HCT116 (cell line): ENCODE measurements at regions of chr4 and their contacts with region 1.

Region 1: GRCh38 chr4:184460499-184461285 is 13.7 kb downstream of the IRF2 start:
- DNase-seq: no peak
- ATAC-seq: no peak
- H3K4me3 ChIP-seq: no peak overlapping the region
- H3K27ac ChIP-seq: no peak overlapping the region
- H3K4me1 ChIP-seq: no peaks in the 10 kb centered on the region
- H3K27me3 ChIP-seq: no peaks in the 10 kb centered on the region
- CTCF ChIP-seq: no peak
- POLR2A ChIP-seq: no peak
- RAD21 ChIP-seq: no peak

Region 2: GRCh38 chr4:184763150-184763780 is 302.6 kb after region 1 on chr4:
- CTCF ChIA-PET with region 1: no interaction called
- POLR2A ChIA-PET with region 1: no interaction called
- RAD21 ChIA-PET with region 1: no interaction called
- intact Hi-C with region 1: no loop called
- DNase-seq: no peak
- ATAC-seq: no peak
- H3K4me3 ChIP-seq: no peak overlapping the region
- H3K27ac ChIP-seq: no peak overlapping the region
- H3K4me1 ChIP-seq: no peaks in the 10 kb centered on the region
- H3K27me3 ChIP-seq: no peaks in the 10 kb centered on the region
- CTCF ChIP-seq: no peak
- POLR2A ChIP-seq: no peak
- RAD21 ChIP-seq: no peak

Region 3: GRCh38 chr4:185323606-185324005 is 862.9 kb after region 1 on chr4:
- CTCF ChIA-PET with region 1: no interaction called
- POLR2A ChIA-PET with region 1: no interaction called
- RAD21 ChIA-PET with region 1: no interaction called
- intact Hi-C with region 1: loop called (anchors 10 kb)
- DNase-seq: no peak
- ATAC-seq: no peak
- H3K4me3 ChIP-seq: no peak overlapping the region
- H3K27ac ChIP-seq: no peak overlapping the region
- H3K4me1 ChIP-seq: peaks cover 2 to 3% of the 10 kb centered on the region in 2 experiments; a peak in 3 of 4 replicates
- H3K27me3 ChIP-seq: no peaks in the 10 kb centered on the region
- CTCF ChIP-seq: no peak
- POLR2A ChIP-seq: no peak
- RAD21 ChIP-seq: no peak